GM12878 (cell line): ENCODE measurements at regions of chr11 and their contacts with region 1.

Region 1: DNA sequence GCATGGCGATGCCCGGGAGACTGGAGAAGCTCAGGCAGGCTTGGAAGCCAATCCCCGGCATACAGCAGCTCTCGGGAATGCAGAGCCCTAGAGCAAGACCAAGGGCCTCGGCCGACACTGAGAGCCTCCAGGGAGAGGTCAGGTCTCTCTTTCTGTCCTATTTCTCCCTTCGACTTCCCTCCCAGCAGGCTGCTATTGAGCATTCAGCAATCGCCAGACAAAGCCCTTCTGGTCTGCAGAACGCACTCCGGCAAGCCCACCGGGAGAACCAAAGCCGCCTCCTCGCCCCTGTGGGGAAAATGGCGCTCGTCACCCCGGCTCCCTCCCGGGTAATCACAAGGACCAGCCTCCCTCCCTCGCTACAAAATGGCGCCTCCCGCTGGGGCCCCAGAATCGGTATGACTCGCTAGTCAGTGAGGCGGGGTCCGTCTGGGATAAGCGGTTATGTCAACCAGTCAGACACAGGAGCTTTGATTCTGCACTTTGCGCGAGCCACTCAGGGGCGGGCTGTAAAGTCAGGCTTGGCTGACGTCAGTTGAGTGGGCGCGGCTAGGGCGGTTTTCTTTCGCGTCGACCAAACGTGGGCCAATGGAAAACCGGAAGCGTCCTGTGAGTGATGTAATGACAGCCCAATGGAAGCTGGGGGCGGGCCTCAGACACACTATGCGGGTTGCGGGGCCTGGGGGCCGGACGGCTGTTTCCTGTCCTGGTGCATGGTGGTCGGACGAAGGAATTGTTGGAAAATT is at the start of gene ZNF143:
- DNase-seq: peak; percentile 99
- ATAC-seq: peak; percentile 88
- H3K4me3 ChIP-seq: peak within 1 kb of the TSS; percentile 98
- H3K27ac ChIP-seq: peak within 1 kb of the TSS; percentile 100
- H3K4me1 ChIP-seq: peaks cover 7% of the 10 kb centered on the region
- H3K27me3 ChIP-seq: no peaks in the 10 kb centered on the region
- CTCF ChIP-seq: no peak
- EP300 ChIP-seq: peak in 1 of 2 experiments; percentile 9; a peak in 1 of 4 replicates
- POLR2A ChIP-seq: peak; percentile 90
- RAD21 ChIP-seq: no peak
- polyA plus RNA-seq, gene ZNF143: 16.1 to 18.3 TPM

Region 2: DNA sequence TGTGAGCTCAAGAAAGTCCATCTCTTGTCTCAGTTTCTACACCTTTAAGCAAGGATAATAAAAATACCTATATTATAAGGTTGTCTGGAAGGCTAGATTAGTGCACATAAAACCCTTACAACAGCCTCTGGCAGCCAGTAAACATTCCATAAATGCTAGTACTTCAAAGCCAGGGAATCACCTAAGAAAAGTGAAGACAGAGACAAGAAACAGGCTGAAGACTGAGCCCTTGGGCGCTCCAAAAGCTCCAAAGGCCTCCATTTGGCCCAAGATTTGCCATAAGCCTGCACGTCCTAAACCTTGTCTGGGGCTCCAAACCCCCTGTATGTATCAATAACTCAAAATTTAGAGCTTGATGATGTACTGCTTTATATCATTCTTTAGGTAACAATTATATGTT is 601.7 kb before region 1 on chr11:
- CTCF ChIA-PET with region 1: no interaction called
- POLR2A ChIA-PET with region 1: no interaction called
- RAD21 ChIA-PET with region 1: no interaction called
- SMC1A ChIA-PET with region 1: no interaction called
- in situ Hi-C with region 1: no loop called
- intact Hi-C with region 1: no loop called
- DNase-seq: no peak
- ATAC-seq: no peak
- H3K4me3 ChIP-seq: no peak overlapping the region
- H3K27ac ChIP-seq: no peak overlapping the region
- H3K4me1 ChIP-seq: no peaks in the 10 kb centered on the region
- H3K27me3 ChIP-seq: no peaks in the 10 kb centered on the region
- CTCF ChIP-seq: no peak
- EP300 ChIP-seq: no peak
- POLR2A ChIP-seq: no peak
- RAD21 ChIP-seq: no peak

Region 3: GRCh38 chr11:9384535-9385303 is 75.8 kb before region 1 on chr11 and contains the start of gene IPO7:
- CTCF ChIA-PET with region 1: interaction called, 13 read pairs
- POLR2A ChIA-PET with region 1: interaction called, 7 read pairs
- RAD21 ChIA-PET with region 1: interaction called, 20 read pairs
- SMC1A ChIA-PET with region 1: interaction called, 5 read pairs
- in situ Hi-C with region 1: no loop called
- intact Hi-C with region 1: no loop called
- DNase-seq: peak; percentile 60
- ATAC-seq: peak; percentile 97
- H3K4me3 ChIP-seq: peak within 1 kb of the TSS; percentile 97
- H3K27ac ChIP-seq: peak within 1 kb of the TSS; percentile 91
- H3K4me1 ChIP-seq: peaks cover 3% of the 10 kb centered on the region; the same call in 1 of the 2 replicates
- H3K27me3 ChIP-seq: no peaks in the 10 kb centered on the region
- CTCF ChIP-seq: peak in 2 of 3 experiments; percentile 10 to 13; a peak in 1 of 6 replicates
- EP300 ChIP-seq: 0 out of 4 replicates have a peak, but pooled peaks of 1 of the 2 experiments have one; percentile 20
- POLR2A ChIP-seq: peak; percentile 99
- RAD21 ChIP-seq: no peak
- polyA plus RNA-seq, gene IPO7: 9.2 to 9.9 TPM

Region 4: DNA sequence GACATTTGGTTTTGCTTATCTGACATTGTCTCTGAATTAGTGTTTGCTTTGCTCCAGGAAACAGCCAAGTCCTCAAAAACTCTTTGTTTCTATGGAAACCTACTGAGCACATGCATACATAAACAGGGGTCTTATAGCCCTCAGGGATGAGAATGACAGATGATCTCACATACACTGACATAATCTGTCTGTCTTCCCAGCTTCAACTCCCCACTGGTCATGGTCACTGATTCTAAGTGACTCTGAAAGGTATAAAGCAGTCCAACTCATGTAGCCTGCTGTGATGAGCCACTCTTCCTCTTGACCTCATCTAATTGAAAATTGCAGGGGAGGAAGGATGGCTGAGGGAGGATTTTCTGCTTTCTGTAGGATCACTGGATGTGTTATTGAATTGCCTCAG is 12.9 kb after region 1 on chr11:
- CTCF ChIA-PET with region 1: interaction called, 3 read pairs
- POLR2A ChIA-PET with region 1: interaction called, 5 read pairs
- RAD21 ChIA-PET with region 1: interaction called, 3 read pairs
- SMC1A ChIA-PET with region 1: interaction called, 11 read pairs
- in situ Hi-C with region 1: no loop called
- intact Hi-C with region 1: no loop called
- DNase-seq: no peak
- ATAC-seq: no peak
- H3K4me3 ChIP-seq: no peak overlapping the region
- H3K27ac ChIP-seq: no peak overlapping the region
- H3K4me1 ChIP-seq: no peaks in the 10 kb centered on the region
- H3K27me3 ChIP-seq: no peaks in the 10 kb centered on the region
- CTCF ChIP-seq: no peak
- EP300 ChIP-seq: no peak
- POLR2A ChIP-seq: no peak
- RAD21 ChIP-seq: no peak

Region 5: GRCh38 chr11:9573052-9573774 is 112.7 kb after region 1 on chr11 and contains the start of gene WEE1:
- CTCF ChIA-PET with region 1: no interaction called
- POLR2A ChIA-PET with region 1: interaction called, 11 read pairs
- RAD21 ChIA-PET with region 1: interaction called, 7 read pairs
- SMC1A ChIA-PET with region 1: interaction called, 4 read pairs
- in situ Hi-C with region 1: no loop called
- intact Hi-C with region 1: loop called (anchors 2 kb)
- DNase-seq: peak; percentile 86
- ATAC-seq: peak; percentile 94
- H3K4me3 ChIP-seq: peak within 1 kb of the TSS; percentile 90
- H3K27ac ChIP-seq: peak within 1 kb of the TSS; percentile 90
- H3K4me1 ChIP-seq: peaks cover 6% of the 10 kb centered on the region; the same call in 1 of the 2 replicates
- H3K27me3 ChIP-seq: no peaks in the 10 kb centered on the region
- CTCF ChIP-seq: no peak
- EP300 ChIP-seq: no peak
- POLR2A ChIP-seq: peak; percentile 84
- RAD21 ChIP-seq: no peak
- polyA plus RNA-seq, gene WEE1: 20.6 to 22.2 TPM